ENCODE measurements at regions of chr7 and their contacts with region 1.

Region 1: GRCh38 chr7:65307651-65308299 is 65.9 kb upstream of the ZNF92 start:
- DNase-seq: no peak

Region 2: GRCh38 chr7:64951250-64951848 is 356.4 kb before region 1 on chr7:
- intact Hi-C with region 1: loop called (anchors 5 kb)
- DNase-seq: no peak

Measured in posterior vena cava (tissue), 2 donors.